Endothelial cell of umbilical vein (primary cell): ENCODE measurements at regions of chr5 and their contacts with region 1.

Region 1: DNA sequence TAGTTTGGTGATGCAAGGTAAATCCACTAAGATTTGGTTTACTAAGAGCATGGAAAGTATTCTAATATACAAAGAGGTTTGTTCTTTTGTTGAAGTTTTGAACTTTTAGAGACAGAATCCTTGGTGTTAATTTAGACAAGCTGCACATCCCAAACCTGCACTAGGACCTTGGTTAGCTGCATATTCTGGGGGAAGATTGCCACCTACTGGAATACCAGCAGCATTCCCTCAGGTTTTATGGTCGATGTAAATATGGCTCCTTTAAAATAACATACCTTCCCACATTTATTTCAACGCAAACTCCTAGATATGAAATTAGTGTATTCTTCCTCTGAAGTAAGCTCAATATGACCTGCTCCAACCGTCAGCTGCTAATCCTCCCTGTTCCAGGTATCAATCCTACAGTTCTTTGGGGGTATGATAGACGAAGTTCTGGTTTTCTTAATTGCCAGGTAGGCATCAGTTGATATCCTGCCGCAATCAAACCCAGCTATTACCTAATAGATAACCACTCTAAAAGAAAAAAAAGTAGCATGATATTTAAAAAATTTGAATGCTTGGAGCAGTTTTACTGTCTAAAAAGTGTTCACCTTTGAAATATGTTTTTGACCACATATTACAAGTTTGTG is 624.1 kb downstream of the ISL1 start:
- DNase-seq: peak; percentile 48
- H3K4me3 ChIP-seq: no peak overlapping the region
- H3K27ac ChIP-seq: no peak overlapping the region
- H3K4me1 ChIP-seq: no peaks in the 10 kb centered on the region
- H3K27me3 ChIP-seq: no peaks in the 10 kb centered on the region
- CTCF ChIP-seq: peak; percentile 51 to 67
- POLR2A ChIP-seq: no peak

Region 2: GRCh38 chr5:52356311-52356918 is 349.1 kb after region 1 on chr5:
- CTCF ChIA-PET with region 1: interaction called, 18 read pairs
- POLR2A ChIA-PET with region 1: no interaction called
- dilution Hi-C with region 1: no loop called
- intact Hi-C with region 1: loop called (anchors 1 kb)
- DNase-seq: peak; percentile 30
- H3K4me3 ChIP-seq: no peak overlapping the region
- H3K27ac ChIP-seq: no peak overlapping the region
- H3K4me1 ChIP-seq: no peaks in the 10 kb centered on the region
- H3K27me3 ChIP-seq: no peaks in the 10 kb centered on the region
- CTCF ChIP-seq: peak; percentile 34 to 45
- POLR2A ChIP-seq: no peak

Region 3: GRCh38 chr5:52560366-52560765 is 553.0 kb after region 1 on chr5:
- CTCF ChIA-PET with region 1: no interaction called
- POLR2A ChIA-PET with region 1: no interaction called
- dilution Hi-C with region 1: no loop called
- intact Hi-C with region 1: loop called (anchors 2 kb)
- DNase-seq: peak; percentile 14
- H3K4me3 ChIP-seq: no peak overlapping the region
- H3K27ac ChIP-seq: no peak overlapping the region
- H3K4me1 ChIP-seq: no peaks in the 10 kb centered on the region
- H3K27me3 ChIP-seq: no peaks in the 10 kb centered on the region
- CTCF ChIP-seq: no peak
- POLR2A ChIP-seq: no peak

Region 4: DNA sequence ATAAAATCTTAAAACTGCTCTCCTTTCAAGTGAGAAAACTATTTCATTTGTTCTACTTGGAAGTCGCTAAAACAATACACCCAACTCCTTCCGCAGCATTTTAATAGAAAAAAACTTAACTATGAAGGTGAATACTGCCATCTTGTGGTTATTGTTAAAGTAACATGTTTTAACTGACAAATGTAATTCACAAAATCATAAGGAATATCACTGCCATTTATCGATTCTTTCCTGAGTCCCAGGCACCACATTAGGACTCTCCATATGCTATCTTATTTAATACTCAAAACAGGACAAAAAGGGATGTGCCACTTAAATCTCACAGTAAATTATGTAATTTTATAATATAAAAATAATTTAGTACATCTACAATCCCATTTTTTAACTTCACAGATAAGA is 649.9 kb after region 1 on chr5:
- CTCF ChIA-PET with region 1: no interaction called
- POLR2A ChIA-PET with region 1: no interaction called
- dilution Hi-C with region 1: no loop called
- intact Hi-C with region 1: loop called (anchors 1 kb)
- DNase-seq: peak; percentile 58
- H3K4me3 ChIP-seq: no peak overlapping the region
- H3K27ac ChIP-seq: no peak overlapping the region
- H3K4me1 ChIP-seq: no peaks in the 10 kb centered on the region
- H3K27me3 ChIP-seq: peaks cover 9 to 19% of the 10 kb centered on the region in 2 experiments
- CTCF ChIP-seq: peak; percentile 19 to 21
- POLR2A ChIP-seq: no peak